ENCODE measurements at regions of chr2 and their contacts with region 1.

Region 1: GRCh38 chr2:190746971-190747761 is 98.3 kb downstream of the NAB1 start:
- DNase-seq: peak; percentile 44
- H3K4me3 ChIP-seq: no peak overlapping the region
- H3K27ac ChIP-seq: peak overlapping the region; percentile 12
- H3K4me1 ChIP-seq: peaks cover 11% of the 10 kb centered on the region
- H3K27me3 ChIP-seq: peaks cover 0 to 3% of the 10 kb centered on the region in 2 experiments
- CTCF ChIP-seq: no peak
- POLR2A ChIP-seq: no peak

Region 2: GRCh38 chr2:190718652-190719526 is 28.3 kb before region 1 on chr2:
- CTCF ChIA-PET with region 1: interaction called, 4 read pairs
- POLR2A ChIA-PET with region 1: no interaction called
- dilution Hi-C with region 1: no loop called
- intact Hi-C with region 1: loop called (anchors 2 kb)
- DNase-seq: peak; percentile 85
- H3K4me3 ChIP-seq: no peak overlapping the region
- H3K27ac ChIP-seq: peak overlapping the region; percentile 89
- H3K4me1 ChIP-seq: peaks cover 42% of the 10 kb centered on the region
- H3K27me3 ChIP-seq: no peaks in the 10 kb centered on the region
- CTCF ChIP-seq: no peak
- POLR2A ChIP-seq: no peak

Region 3: GRCh38 chr2:191165176-191165643 is 418.0 kb after region 1 on chr2:
- CTCF ChIA-PET with region 1: no interaction called
- POLR2A ChIA-PET with region 1: no interaction called
- dilution Hi-C with region 1: no loop called
- intact Hi-C with region 1: no loop called
- DNase-seq: peak; percentile 68
- H3K4me3 ChIP-seq: no peak overlapping the region
- H3K27ac ChIP-seq: no peak overlapping the region
- H3K4me1 ChIP-seq: peaks cover 3% of the 10 kb centered on the region
- H3K27me3 ChIP-seq: no peaks in the 10 kb centered on the region
- CTCF ChIP-seq: peak; percentile 48 to 52
- POLR2A ChIP-seq: no peak